Left lung (tissue), 14 donors: ENCODE measurements at regions of chr7 and their contacts with region 1.

Region 1: GRCh38 chr7:45917658-45918057 is 3.4 kb downstream of the IGFBP3 start:
- DNase-seq: peak; percentile 66 to 89 (median 78)
- ATAC-seq: peak; percentile 63
- H3K4me3 ChIP-seq: no peak overlapping the region
- H3K27ac ChIP-seq: no peak overlapping the region
- H3K4me1 ChIP-seq: peaks cover 10 to 23% of the 10 kb centered on the region in 2 donors
- H3K27me3 ChIP-seq: peaks cover 32 to 70% of the 10 kb centered on the region in 2 donors
- CTCF ChIP-seq: peak; percentile 91 to 96

Region 2: GRCh38 chr7:45258533-45259226 is 659.0 kb before region 1 on chr7:
- intact Hi-C with region 1: no loop called
- DNase-seq: no peak
- ATAC-seq: no peak
- H3K4me3 ChIP-seq: no peak overlapping the region
- H3K27ac ChIP-seq: no peak overlapping the region
- H3K4me1 ChIP-seq: peaks cover 0 to 7% of the 10 kb centered on the region in 2 donors
- H3K27me3 ChIP-seq: peaks cover 0 to 14% of the 10 kb centered on the region in 2 donors
- CTCF ChIP-seq: no peak

Region 3: GRCh38 chr7:45938626-45939302 is 21.1 kb after region 1 on chr7:
- intact Hi-C with region 1: no loop called
- DNase-seq: no peak
- ATAC-seq: no peak
- H3K4me3 ChIP-seq: no peak overlapping the region
- H3K27ac ChIP-seq: no peak overlapping the region
- H3K4me1 ChIP-seq: no peaks in the 10 kb centered on the region
- H3K27me3 ChIP-seq: no peaks in the 10 kb centered on the region
- CTCF ChIP-seq: no peak

Region 4: DNA sequence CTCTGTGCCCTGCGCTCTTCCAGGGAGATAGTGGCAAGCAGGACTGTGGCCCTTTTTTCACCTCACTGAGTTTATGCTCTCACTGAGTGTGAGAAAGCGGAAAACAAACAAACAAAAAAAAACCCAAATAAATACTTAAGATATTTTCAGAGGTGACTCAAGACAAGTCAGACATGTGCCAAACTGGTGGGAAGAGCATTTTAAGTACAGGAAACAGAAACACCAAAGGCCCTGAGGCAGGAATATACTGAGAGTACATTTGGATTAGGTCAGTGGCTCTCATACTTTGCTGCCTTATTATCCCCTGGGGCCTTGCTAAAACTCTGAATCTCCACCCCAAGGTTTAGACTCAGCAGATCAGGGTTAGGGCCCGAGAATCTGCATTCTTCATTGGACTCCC is 115.3 kb after region 1 on chr7:
- intact Hi-C with region 1: no loop called
- DNase-seq: no peak
- ATAC-seq: peak; percentile 22
- H3K4me3 ChIP-seq: no peak overlapping the region
- H3K27ac ChIP-seq: no peak overlapping the region
- H3K4me1 ChIP-seq: no peaks in the 10 kb centered on the region
- H3K27me3 ChIP-seq: no peaks in the 10 kb centered on the region
- CTCF ChIP-seq: no peak

Region 5: DNA sequence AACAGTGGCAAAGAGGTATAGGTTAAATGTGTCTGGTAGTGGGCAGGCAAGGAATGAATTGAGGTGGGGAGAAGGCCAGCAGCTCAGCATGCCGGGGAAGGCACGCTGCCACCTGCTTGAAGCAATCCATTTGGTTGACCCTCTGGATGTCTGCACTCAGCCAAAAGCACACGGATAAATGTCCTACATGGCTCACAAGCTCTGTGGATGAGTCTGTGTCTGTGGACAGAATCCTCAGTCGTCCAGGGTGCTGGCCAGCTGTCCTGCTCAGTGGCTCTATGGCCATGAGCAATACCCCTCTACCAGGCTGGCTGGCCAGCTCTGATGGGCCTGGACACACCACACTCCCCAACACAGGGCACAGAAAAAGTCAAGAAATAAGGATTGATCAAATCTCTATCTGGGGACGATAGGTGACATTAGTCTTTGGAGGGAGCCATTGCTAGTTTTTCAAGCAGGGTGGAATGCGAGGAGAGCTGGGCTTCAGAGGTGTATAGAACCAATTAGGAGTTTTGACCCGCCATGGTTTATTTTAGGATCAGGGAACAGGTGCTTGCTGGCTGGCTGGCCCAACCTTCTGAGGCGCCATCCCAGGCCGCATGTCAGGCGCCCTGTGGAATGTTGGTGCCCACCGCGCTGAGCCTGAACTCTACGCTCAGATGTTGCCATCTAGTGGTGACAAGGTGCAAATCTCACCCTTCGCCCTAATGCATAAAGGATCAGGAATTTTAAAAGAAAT is 1170.8 kb after region 1 on chr7:
- intact Hi-C with region 1: loop called in 1 of 2 experiments (anchors 10 kb)
- DNase-seq: peak in 2 of 4 donors; percentile 47 to 72
- ATAC-seq: peak; percentile 95
- H3K4me3 ChIP-seq: no peak overlapping the region
- H3K27ac ChIP-seq: no peak overlapping the region
- H3K4me1 ChIP-seq: no peaks in the 10 kb centered on the region
- H3K27me3 ChIP-seq: no peaks in the 10 kb centered on the region
- CTCF ChIP-seq: peak; percentile 81 to 82

Region 6: GRCh38 chr7:47179812-47180515 is 1262.3 kb after region 1 on chr7:
- intact Hi-C with region 1: loop called in 1 of 2 experiments (anchors 10 kb)
- DNase-seq: peak in 2 of 4 donors; percentile 59 to 78
- ATAC-seq: peak; percentile 78
- H3K4me3 ChIP-seq: no peak overlapping the region
- H3K27ac ChIP-seq: no peak overlapping the region
- H3K4me1 ChIP-seq: peaks cover 0 to 6% of the 10 kb centered on the region in 2 donors
- H3K27me3 ChIP-seq: no peaks in the 10 kb centered on the region
- CTCF ChIP-seq: peak; percentile 69